Ascending aorta (tissue), 2 donors: ENCODE measurements at regions of chr15 and their contacts with region 1.

Region 1: DNA sequence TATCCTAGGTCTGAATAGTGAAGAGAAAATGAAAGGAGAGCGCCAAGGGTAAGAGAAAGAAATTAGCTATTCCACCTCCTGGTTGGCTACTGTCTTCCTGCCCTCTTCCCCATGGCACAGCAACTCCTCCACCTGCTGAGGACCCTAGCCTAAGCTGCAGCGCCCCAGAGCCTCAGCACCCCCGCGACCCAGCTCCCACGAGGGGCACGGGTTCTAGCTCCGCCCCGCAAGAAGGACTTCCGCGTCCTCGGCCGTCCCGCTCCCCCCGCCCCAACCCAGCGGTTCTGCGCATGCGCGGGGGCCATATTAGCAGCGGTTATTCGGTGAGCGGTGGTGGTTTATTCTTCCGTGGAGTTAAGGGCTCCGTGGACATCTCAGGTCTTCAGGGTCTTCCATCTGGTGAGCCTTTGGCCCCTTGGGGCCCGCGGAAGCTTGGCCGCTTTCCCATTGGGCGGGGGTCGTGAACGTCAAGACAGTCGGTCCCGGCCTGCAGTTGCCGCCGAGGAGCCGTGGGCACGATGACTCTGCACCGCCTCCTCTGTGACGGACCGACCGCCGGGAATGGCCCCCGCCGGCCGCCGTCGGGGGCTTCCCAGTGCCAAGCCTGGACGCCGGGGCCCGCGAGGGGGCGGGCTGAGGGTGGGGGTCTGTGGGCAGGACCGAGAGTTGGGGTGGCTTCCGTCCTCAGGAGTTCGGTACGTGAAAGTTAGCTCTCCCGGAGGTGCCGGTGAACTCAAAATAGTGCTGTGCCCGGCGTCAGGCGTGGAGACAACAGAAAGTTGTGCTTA is at the start of gene PSMA4:
- DNase-seq: peak; percentile 77 to 95
- H3K4me3 ChIP-seq: peak within 1 kb of the TSS; percentile 76 to 94
- H3K27ac ChIP-seq: peak within 1 kb of the TSS; percentile 95 to 97
- H3K4me1 ChIP-seq: peaks cover 0 to 11% of the 10 kb centered on the region in 2 donors
- H3K27me3 ChIP-seq: no peaks in the 10 kb centered on the region
- CTCF ChIP-seq: peak in 2 of 3 experiments; percentile 26 to 53
- total RNA-seq, gene PSMA4: 94.7 TPM

Region 2: DNA sequence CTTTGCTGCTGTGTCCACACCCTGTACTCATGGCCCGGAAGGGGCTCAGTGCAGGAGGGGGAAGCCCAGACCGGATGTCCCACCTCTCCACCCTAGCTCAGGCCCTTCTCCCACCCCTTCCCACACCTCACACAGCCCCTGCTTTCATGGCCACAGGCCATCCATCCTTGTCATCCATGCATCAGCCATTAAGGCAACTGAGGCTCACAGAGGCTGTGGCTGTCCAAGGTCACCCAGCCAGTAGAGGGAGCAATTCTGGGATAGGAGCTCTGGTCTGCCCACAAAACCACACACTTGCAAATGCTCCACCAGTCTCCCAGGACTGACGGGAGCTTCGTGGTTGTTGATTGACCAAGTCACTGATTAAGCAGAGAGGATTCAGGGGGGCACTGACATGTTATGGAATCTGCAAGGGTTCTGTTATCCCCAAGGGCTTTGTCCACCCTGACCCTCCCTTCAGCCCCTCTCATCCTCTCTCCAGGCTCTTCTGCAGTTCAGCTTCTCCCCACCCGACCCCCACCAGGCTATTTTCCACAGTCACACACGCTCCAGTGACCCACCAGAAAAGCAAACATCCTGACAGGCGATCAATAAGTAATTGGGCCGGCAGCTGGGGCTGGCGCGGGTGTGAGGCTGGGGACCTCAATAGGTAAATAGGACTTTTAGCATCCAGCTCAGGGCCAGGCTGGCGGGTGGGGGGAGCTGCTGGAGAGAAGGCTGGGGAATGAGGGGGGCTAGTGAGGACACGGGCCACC is 922.7 kb before region 1 on chr15:
- intact Hi-C with region 1: no loop called
- DNase-seq: no peak
- H3K4me3 ChIP-seq: no peak overlapping the region
- H3K27ac ChIP-seq: no peak overlapping the region
- H3K4me1 ChIP-seq: no peaks in the 10 kb centered on the region
- H3K27me3 ChIP-seq: no peaks in the 10 kb centered on the region
- CTCF ChIP-seq: no peak

Region 3: GRCh38 chr15:78506971-78507830 is 33.1 kb before region 1 on chr15 and contains the start of gene HYKK:
- intact Hi-C with region 1: loop called (anchors 1 kb)
- DNase-seq: peak; percentile 73 to 97
- H3K4me3 ChIP-seq: peak within 1 kb of the TSS; percentile 61 to 76
- H3K27ac ChIP-seq: peak within 1 kb of the TSS; percentile 44 to 59
- H3K4me1 ChIP-seq: peaks cover 0 to 4% of the 10 kb centered on the region in 2 donors
- H3K27me3 ChIP-seq: no peaks in the 10 kb centered on the region
- CTCF ChIP-seq: peak in 1 of 3 experiments; percentile 28
- total RNA-seq, gene HYKK: 9.0 TPM

Region 4: GRCh38 chr15:78565097-78565951 is 25.0 kb after region 1 on chr15 and contains the start of gene CHRNA5:
- intact Hi-C with region 1: loop called (anchors 1 kb)
- DNase-seq: peak; percentile 56 to 93
- H3K4me3 ChIP-seq: peak within 1 kb of the TSS; percentile 61 to 67
- H3K27ac ChIP-seq: no peak within 1 kb of the TSS
- H3K4me1 ChIP-seq: peaks cover 6 to 7% of the 10 kb centered on the region in 2 donors
- H3K27me3 ChIP-seq: no peaks in the 10 kb centered on the region
- CTCF ChIP-seq: no peak
- total RNA-seq, gene CHRNA5: not detected